Sigmoid colon (tissue), 7 donors: ENCODE measurements at regions of chr16 and their contacts with region 1.

Region 1: DNA sequence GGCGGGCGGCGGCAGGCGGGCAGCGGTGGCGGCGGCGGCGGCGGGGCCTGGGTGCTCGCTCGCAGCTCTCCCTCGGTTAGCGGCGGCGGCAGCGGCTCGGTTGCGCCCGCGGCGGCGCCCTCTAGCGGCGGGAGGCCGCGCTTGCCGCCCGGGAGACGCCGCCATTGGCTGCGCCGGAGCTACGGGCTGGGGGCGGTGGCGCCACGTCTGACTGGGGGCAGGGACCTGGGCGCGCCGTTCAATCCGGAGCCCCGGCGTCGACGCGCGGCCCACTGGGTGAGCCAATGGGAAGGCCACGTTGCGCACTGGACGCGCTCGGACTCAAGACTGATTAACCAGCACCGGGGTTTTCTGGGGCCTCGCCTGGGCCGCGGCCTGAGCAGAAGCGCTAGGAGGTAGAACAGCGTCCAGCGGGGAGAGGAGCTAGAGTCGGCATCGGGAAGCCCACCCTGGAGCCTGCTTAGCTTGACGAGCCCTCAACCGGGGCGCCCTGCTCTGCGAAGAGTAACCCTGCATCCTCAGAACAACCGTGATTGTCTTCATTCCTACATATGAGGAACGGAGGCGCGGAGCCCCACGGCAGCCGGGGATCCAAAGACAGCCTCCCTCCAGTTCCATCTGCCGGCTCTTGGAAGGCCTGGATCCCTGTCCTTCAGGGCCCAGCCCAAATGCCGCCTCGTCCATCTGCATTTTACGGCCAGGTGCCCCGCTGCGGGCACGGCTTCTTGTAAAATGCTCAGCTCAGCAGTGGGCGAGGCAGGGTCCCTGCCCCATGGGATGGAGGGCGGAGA is at the start of gene ZC3H7A:
- DNase-seq: peak; percentile 99
- H3K4me3 ChIP-seq: peak within 1 kb of the TSS; percentile 68 to 98 (median 95)
- H3K27ac ChIP-seq: peak within 1 kb of the TSS; percentile 95 to 99 (median 98)
- H3K4me1 ChIP-seq: peaks cover 0 to 65% (median 58%) of the 10 kb centered on the region in 4 donors
- H3K27me3 ChIP-seq: no peaks in the 10 kb centered on the region
- CTCF ChIP-seq: peak in 2 of 4 experiments; percentile 42 to 63
- EP300 ChIP-seq: no peak
- POLR2A ChIP-seq: peak; percentile 93 to 95
- total RNA-seq, gene ZC3H7A: 45.5 to 62.5 (median 55.7) TPM

Region 2: DNA sequence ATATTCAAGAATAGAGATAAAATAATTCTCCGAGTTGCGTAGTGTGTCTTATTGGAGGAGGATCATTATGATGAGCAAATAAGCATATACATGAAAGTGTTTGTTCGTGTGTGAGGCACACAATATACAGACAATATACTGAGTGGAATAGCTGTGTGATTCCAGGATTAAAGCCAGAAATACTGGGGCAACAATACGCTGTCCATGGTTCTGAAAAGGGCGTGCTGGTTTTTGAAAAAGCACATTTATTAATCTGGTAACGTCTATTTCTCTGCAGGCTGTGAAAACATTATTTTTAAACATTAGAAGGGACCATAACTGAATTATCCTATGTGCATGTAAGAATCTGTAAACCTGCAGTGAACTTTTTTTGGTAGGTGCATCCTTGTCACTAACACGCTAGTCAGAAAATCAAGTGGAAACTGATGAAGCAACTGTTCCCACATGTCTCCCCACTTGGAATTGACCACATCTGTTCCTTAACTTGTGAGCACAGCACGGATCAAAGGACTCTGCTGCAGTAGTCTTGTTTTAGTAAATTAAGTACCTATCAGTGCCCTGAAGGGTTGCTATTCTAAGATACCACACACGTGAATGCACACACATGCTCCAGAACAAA is 1961.1 kb before region 1 on chr16:
- intact Hi-C with region 1: no loop called
- DNase-seq: no peak
- H3K4me3 ChIP-seq: no peak overlapping the region
- H3K27ac ChIP-seq: no peak overlapping the region
- H3K4me1 ChIP-seq: no peaks in the 10 kb centered on the region
- H3K27me3 ChIP-seq: no peaks in the 10 kb centered on the region
- CTCF ChIP-seq: no peak
- EP300 ChIP-seq: no peak
- POLR2A ChIP-seq: no peak

Region 3: GRCh38 chr16:10964039-10964890 is 833.1 kb before region 1 on chr16:
- intact Hi-C with region 1: loop called (anchors 10 kb)
- DNase-seq: peak; percentile 89
- H3K4me3 ChIP-seq: no peak overlapping the region
- H3K27ac ChIP-seq: peak overlapping the region; percentile 10 to 71 (median 37)
- H3K4me1 ChIP-seq: peaks cover 0 to 25% (median 17%) of the 10 kb centered on the region in 4 donors
- H3K27me3 ChIP-seq: no peaks in the 10 kb centered on the region
- CTCF ChIP-seq: peak; percentile 91 to 95 (median 94)
- EP300 ChIP-seq: no peak
- POLR2A ChIP-seq: no peak

Region 4: DNA sequence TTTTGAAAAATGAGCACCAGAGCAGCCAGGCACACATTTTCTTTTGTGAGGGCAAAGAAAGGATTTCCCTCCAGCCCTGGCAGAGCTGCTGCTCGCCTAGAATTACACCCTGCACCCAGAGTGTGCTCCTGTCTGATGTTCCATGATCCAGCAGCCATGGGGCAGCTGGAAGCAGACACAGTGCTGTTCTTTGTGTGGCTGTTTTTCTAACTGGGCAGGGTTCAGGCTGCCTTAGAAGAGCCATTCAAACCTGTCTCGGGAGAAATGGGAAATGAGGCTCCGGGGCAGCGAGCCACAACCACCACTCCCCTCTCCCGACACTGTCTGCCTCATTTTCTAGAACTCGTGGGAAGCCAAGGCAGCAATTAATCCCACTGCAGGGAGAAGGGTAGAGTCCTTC is 239.6 kb before region 1 on chr16:
- intact Hi-C with region 1: no loop called
- DNase-seq: no peak
- H3K4me3 ChIP-seq: no peak overlapping the region
- H3K27ac ChIP-seq: peak overlapping the region; percentile 37 to 57 (median 50)
- H3K4me1 ChIP-seq: peaks cover 0 to 28% (median 10%) of the 10 kb centered on the region in 4 donors
- H3K27me3 ChIP-seq: no peaks in the 10 kb centered on the region
- CTCF ChIP-seq: no peak
- EP300 ChIP-seq: no peak
- POLR2A ChIP-seq: no peak

Region 5: GRCh38 chr16:11621920-11622651 is 175.3 kb before region 1 on chr16:
- intact Hi-C with region 1: no loop called
- DNase-seq: no peak
- H3K4me3 ChIP-seq: peak overlapping the region in 3 of 4 donors; percentile 17 to 34 (median 18)
- H3K27ac ChIP-seq: peak overlapping the region; percentile 38 to 65 (median 43)
- H3K4me1 ChIP-seq: peaks cover 0 to 13% (median 4%) of the 10 kb centered on the region in 4 donors
- H3K27me3 ChIP-seq: no peaks in the 10 kb centered on the region
- CTCF ChIP-seq: no peak
- EP300 ChIP-seq: no peak
- POLR2A ChIP-seq: no peak

Region 6: GRCh38 chr16:11689031-11689761 is 108.2 kb before region 1 on chr16:
- intact Hi-C with region 1: no loop called
- DNase-seq: peak; percentile 48
- H3K4me3 ChIP-seq: no peak overlapping the region
- H3K27ac ChIP-seq: peak overlapping the region in 3 of 4 donors; percentile 41 to 76 (median 56)
- H3K4me1 ChIP-seq: peaks cover 0 to 49% (median 38%) of the 10 kb centered on the region in 4 donors
- H3K27me3 ChIP-seq: no peaks in the 10 kb centered on the region
- CTCF ChIP-seq: no peak
- EP300 ChIP-seq: no peak
- POLR2A ChIP-seq: no peak

Region 7: GRCh38 chr16:11742539-11743307 is 54.6 kb before region 1 on chr16 and contains the start of gene TXNDC11:
- intact Hi-C with region 1: loop called (anchors 2 kb)
- DNase-seq: peak; percentile 100
- H3K4me3 ChIP-seq: peak within 1 kb of the TSS; percentile 72 to 99 (median 92)
- H3K27ac ChIP-seq: peak within 1 kb of the TSS; percentile 96 to 100 (median 98)
- H3K4me1 ChIP-seq: peaks cover 0 to 41% (median 34%) of the 10 kb centered on the region in 4 donors
- H3K27me3 ChIP-seq: no peaks in the 10 kb centered on the region
- CTCF ChIP-seq: no peak
- EP300 ChIP-seq: peak in 2 of 4 donors; percentile 40 to 91
- POLR2A ChIP-seq: peak; percentile 65 to 74
- total RNA-seq, gene TXNDC11: 25.3 to 35.2 (median 28.8) TPM

Region 8: DNA sequence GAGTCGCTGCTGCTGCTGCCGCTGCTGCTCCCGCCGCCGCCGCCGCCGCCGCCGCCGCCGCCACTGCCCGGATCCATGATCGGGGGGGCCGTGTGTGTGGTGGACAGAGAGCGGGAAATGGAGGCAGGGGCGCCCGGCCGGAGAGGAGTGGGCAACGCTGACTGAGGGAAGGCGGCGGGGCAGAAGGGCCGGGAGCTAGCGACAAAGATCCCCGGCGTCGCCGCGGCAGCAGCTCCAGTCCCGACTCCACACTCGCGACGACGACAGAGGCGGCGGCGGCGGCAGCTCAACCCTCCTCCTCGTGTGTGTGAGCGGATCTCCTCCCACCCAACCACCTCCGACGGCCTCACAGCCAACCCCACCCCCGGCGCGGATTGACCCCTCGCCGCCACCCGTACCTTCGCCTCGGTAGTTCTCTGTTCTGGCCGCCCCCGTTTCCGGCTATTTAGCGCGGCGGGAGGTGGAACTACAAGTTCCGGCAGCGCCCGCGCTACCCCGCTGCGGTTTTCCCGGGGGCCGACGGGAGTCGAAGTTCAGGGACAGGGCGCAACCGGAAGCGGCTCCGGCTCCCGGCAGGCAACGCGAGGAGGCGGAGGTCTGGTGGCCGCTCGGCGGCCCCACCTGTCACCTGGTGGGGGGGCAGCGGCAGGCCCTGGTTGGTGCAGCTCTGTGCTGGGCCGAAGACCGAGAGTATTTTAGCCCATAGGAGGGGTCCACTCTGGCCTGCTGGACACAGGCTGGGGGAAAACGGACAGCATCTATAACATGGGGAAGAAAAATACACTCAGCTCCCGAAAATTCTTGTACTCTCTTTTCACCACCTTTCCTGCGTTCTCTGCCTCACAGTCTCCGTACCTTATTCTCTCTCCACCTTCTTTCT is 118.5 kb after region 1 on chr16 and contains the start of gene GSPT1:
- intact Hi-C with region 1: loop called (anchors 1 kb)
- DNase-seq: peak; percentile 99
- H3K4me3 ChIP-seq: peak within 1 kb of the TSS; percentile 71 to 98 (median 90)
- H3K27ac ChIP-seq: peak within 1 kb of the TSS; percentile 95 to 98 (median 97)
- H3K4me1 ChIP-seq: peaks cover 0 to 42% (median 41%) of the 10 kb centered on the region in 4 donors
- H3K27me3 ChIP-seq: no peaks in the 10 kb centered on the region
- CTCF ChIP-seq: peak in 2 of 4 experiments; percentile 15 to 35
- EP300 ChIP-seq: peak in 2 of 4 donors; percentile 53 to 79
- POLR2A ChIP-seq: peak; percentile 81 to 90
- total RNA-seq, gene GSPT1: 51.8 to 73.5 (median 52.3) TPM

Region 9: DNA sequence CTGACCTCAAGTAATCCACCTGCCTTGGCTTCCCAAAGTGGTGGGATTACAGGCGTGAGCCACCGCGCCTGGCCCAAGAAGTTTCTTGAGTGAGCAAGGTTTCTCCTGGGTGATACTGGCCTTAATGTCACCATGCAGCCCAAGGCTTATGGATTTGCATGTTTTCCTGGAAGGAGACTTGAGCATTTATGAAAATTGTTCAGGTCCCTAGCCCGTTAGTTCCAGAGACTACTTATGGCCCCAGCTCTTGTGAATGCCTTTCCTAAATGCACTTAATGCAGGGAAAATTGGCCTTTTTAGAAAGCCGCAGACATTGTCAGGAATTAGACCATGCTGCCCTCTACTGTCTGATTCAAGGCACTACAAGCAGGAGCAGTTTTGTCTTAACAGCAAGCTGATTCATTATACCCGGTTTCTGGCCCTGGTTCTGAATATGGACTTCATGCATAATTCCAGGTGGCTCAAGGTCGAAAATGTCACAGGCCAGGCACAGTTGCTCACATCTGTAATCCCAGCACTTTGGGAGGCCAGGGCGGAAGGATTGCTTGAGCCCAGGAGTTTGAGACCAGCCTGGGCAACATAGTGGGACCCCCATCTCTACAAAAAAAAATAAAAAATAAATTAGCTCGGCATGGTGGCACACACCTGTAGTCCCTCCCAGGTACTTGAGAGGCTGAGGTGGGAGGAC is 270.5 kb after region 1 on chr16:
- intact Hi-C with region 1: loop called (anchors 10 kb)
- DNase-seq: no peak
- H3K4me3 ChIP-seq: no peak overlapping the region
- H3K27ac ChIP-seq: no peak overlapping the region
- H3K4me1 ChIP-seq: peaks cover 0 to 4% (median 1%) of the 10 kb centered on the region in 4 donors
- H3K27me3 ChIP-seq: no peaks in the 10 kb centered on the region
- CTCF ChIP-seq: peak; percentile 60 to 97 (median 92)
- EP300 ChIP-seq: no peak
- POLR2A ChIP-seq: no peak